ENCODE measurements at regions of chr18 and their contacts with region 1.

Region 1: DNA sequence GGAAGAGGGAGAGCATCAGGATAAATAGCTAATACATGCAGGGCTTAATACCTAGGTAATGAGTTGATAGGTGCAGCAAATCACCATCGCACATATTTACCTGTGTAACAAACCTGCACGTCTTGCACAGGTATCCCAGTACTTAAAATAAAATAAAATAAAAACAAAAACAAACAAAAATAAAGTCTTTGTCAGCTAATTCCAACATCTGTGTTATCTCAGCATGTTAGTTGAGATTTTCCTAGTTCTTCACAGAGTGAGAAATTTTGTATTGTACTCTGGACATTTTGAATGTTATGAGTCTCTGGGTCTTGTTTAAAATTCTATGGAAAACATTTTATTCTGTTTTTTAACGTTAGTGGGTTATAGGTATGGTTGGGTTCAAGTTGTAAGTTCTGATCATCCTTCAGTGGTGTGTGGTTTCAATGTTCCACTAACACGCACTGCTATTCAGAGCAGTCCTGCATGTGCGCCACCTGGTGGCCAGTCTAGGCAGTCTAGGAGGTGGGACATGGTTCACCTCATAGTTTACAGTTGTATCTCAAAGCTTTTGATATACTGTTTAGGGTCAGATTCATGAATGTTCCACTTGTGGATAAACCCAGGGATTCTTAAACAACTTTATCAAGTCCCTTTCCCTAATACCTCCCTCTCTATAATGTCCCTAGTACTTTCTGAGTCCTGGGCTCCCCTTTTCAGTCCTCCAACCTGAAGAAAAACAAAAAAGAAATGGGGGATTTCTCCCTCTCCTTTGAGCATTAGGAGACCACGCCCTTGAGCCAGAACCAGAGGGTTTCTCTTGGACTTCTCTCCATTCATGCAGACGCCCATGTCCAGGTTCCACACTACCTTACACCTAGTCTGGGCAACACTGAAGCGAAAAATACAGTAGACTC is 213.4 kb upstream of the GATA6 start:
- DNase-seq: peak; percentile 41 to 54
- H3K4me3 ChIP-seq: no peak overlapping the region
- H3K27ac ChIP-seq: no peak overlapping the region
- H3K4me1 ChIP-seq: no peaks in the 10 kb centered on the region
- H3K27me3 ChIP-seq: no peaks in the 10 kb centered on the region
- CTCF ChIP-seq: peak; percentile 83

Region 2: GRCh38 chr18:21930177-21930576 is 25.8 kb before region 1 on chr18:
- CTCF ChIA-PET with region 1: no interaction called
- POLR2A ChIA-PET with region 1: interaction called, 14 read pairs
- intact Hi-C with region 1: no loop called
- DNase-seq: no peak
- H3K4me3 ChIP-seq: no peak overlapping the region
- H3K27ac ChIP-seq: no peak overlapping the region
- H3K4me1 ChIP-seq: no peaks in the 10 kb centered on the region
- H3K27me3 ChIP-seq: no peaks in the 10 kb centered on the region
- CTCF ChIP-seq: no peak